Naive thymus-derived CD8-positive, alpha-beta T cell (primary cell): ENCODE measurements at regions of chr1 and their contacts with region 1.

Region 1: GRCh38 chr1:32321712-32322291 is 14.2 kb downstream of the MARCKSL1 start:
- DNase-seq: peak in 6 of 10 donors; percentile 16 to 55 (median 36)
- ATAC-seq: peak; percentile 90 to 91
- H3K4me3 Mint-ChIP-seq: peak overlapping the region; percentile 62 to 88 (median 72)
- H3K27ac Mint-ChIP-seq: peak overlapping the region; percentile 67 to 94 (median 91)
- H3K4me1 Mint-ChIP-seq: peaks cover 14 to 54% (median 36%) of the 10 kb centered on the region in 4 donors
- H3K27me3 Mint-ChIP-seq: no peaks in the 10 kb centered on the region

Region 2: GRCh38 chr1:32255072-32256071 is 66.4 kb before region 1 on chr1:
- POLR2A ChIA-PET with region 1: interaction called, 35 read pairs
- DNase-seq: peak in 2 of 10 donors; percentile 55 to 61
- ATAC-seq: peak; percentile 6 to 24
- H3K4me3 Mint-ChIP-seq: peak overlapping the region; percentile 79 to 100 (median 88)
- H3K27ac Mint-ChIP-seq: peak overlapping the region; percentile 86 to 99 (median 94)
- H3K4me1 Mint-ChIP-seq: peaks cover 30 to 80% (median 53%) of the 10 kb centered on the region in 4 donors
- H3K27me3 Mint-ChIP-seq: no peaks in the 10 kb centered on the region

Region 3: DNA sequence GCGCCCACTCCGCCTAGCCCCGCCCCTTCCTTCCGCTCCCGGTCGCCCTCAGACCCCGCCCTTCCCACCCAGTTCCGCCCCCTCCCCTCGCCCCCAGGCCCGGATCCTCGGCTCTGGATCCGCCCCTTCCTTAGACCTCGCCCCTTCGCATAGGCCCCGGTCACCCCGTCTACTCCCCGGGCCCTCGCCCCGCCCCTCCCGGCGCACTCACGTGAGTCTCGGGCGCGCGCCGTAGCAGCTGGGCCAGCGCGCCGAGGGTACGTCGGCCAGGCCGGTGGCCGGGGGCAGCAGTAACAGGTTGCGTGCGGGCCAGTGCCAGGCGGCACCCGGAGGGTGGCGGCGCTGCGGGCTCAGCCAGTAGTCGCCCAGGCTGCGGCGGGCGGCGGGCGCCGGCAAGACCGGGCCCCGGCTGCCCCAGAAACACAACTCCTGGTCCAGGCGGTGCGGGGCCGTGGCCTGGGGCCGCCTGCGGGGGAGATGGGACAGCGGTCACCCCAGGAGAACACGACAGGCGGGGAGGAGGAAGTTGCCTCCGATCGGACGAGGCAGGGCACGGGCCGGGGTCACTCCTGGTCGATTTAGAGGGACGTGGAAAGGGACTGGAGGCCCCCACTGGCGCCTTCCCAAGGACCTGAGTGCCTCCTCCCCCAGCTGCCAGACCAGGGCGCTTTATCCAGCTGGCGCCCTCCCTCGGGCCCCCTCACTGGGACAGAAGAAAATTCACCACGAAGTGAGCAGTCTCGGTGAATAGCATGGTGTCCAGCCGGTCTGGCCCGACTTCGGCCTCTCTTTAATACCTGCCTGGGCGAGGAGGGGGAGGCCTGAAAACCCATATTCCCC is 29.8 kb after region 1 on chr1:
- POLR2A ChIA-PET with region 1: interaction called, 10 read pairs
- DNase-seq: peak; percentile 87 to 96 (median 90)
- ATAC-seq: peak; percentile 90 to 93
- H3K4me3 Mint-ChIP-seq: peak overlapping the region; percentile 74 to 91 (median 84)
- H3K27ac Mint-ChIP-seq: peak overlapping the region; percentile 53 to 93 (median 89)
- H3K4me1 Mint-ChIP-seq: peaks cover 25 to 62% (median 50%) of the 10 kb centered on the region in 4 donors
- H3K27me3 Mint-ChIP-seq: no peaks in the 10 kb centered on the region